Activated naive CD4-positive, alpha-beta T cell treated with anti-CD3 and anti-CD28 coated beads, Interleukin-2, amount 10 ng/mL, durations not matched to agents 7 days and 5 days (primary cell): ENCODE measurements at regions of chr4 and their contacts with region 1.

Region 1: DNA sequence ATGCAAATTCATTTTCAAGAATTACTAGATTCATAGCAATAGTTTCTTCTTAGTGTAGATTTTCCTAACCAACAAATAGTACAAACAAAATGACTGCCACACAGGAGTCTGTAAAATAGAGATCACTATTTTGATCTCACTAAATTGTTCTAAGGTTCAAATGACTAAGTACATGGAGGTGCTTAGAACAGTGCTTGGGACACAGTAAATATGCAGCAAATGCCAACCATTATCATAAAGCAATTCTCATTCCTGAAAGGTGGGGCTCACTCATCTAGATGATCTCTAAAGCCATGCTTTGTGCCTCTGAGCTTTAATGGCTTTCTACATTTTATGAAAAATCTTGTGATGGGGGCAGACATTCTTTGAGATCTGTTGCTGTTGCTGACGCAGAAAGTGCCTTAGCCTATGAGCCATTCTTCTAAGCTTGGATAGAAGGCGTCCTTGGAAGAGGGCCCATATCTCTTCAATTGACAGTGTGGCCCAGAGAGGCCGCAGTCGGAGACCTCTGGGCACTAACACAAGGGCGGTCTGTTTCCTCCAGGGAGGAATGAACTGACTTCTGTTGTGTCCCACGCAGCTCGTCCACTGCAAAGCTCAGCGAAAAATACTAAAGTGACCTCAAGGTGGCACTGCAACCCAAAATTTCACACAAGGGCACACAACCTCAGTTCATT is 23.5 kb downstream of the TLR10 start:
- DNase-seq: peak; percentile 76
- H3K4me3 Mint-ChIP-seq: no peak overlapping the region
- H3K27ac Mint-ChIP-seq: no peak overlapping the region
- H3K4me1 Mint-ChIP-seq: peaks cover 51% of the 10 kb centered on the region
- H3K27me3 Mint-ChIP-seq: no peaks in the 10 kb centered on the region

Region 2: DNA sequence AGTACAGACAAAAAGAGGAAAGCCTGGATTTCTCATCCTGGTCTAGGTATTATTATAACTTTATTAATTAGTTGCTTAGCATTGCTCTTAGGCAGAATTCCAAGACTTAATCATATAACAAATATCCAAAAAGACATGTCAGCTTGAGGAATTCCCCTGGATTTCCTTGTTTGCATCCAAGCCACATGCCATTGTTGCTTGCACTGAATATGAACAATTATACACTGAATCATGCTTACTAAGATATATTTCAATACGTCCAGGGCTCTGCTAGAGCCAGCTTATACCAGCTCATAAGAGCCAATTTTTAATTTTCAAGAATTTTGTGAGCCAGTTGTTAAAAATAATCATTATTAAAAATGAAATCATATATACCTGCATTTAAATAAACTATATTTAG is 29.1 kb after region 1 on chr4:
- CTCF ChIA-PET with region 1: interaction called, 89 read pairs
- DNase-seq: no peak
- H3K4me3 Mint-ChIP-seq: no peak overlapping the region
- H3K27ac Mint-ChIP-seq: no peak overlapping the region
- H3K4me1 Mint-ChIP-seq: peaks cover 19% of the 10 kb centered on the region
- H3K27me3 Mint-ChIP-seq: no peaks in the 10 kb centered on the region

Region 3: GRCh38 chr4:38856524-38857337 is 97.5 kb after region 1 on chr4 and contains the start of gene TLR6:
- CTCF ChIA-PET with region 1: interaction called, 121 read pairs
- DNase-seq: peak; percentile 82
- H3K4me3 Mint-ChIP-seq: peak within 1 kb of the TSS; percentile 71
- H3K27ac Mint-ChIP-seq: peak within 1 kb of the TSS; percentile 98
- H3K4me1 Mint-ChIP-seq: peaks cover 57% of the 10 kb centered on the region
- H3K27me3 Mint-ChIP-seq: peaks cover 8% of the 10 kb centered on the region

Region 4: DNA sequence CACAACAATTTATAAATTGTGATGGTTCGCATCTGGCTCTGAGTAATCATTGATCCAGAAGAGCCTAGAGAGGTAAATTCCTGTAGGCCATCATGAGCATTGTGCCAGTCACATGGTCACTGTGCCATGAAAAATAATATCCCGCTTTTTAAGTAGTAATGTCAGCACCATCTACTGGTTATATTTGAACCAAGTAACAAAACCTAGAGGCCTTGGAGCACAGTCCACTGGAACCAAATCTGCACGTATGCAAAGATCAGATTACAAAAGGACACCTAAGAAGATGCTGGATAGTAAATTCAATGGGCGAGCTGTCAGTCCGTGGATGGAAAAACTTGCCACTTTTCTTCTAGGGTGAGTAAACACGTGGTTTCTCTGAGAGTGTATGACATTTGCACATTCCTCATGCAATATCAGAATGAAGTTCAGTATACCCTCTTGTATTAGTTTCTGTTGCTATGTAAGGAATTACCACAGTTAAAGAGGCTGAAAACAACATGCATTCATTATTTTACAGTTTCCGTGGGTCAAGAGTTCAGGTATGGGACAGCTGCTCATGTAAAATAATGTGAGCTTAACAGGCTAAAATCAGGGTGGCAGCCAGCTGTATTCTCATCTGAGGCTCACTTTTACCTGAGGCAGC is 135.2 kb after region 1 on chr4:
- CTCF ChIA-PET with region 1: interaction called, 34 read pairs
- DNase-seq: no peak
- H3K4me3 Mint-ChIP-seq: no peak overlapping the region
- H3K27ac Mint-ChIP-seq: no peak overlapping the region
- H3K4me1 Mint-ChIP-seq: peaks cover 8% of the 10 kb centered on the region
- H3K27me3 Mint-ChIP-seq: peaks cover 7% of the 10 kb centered on the region

Region 5: GRCh38 chr4:39134683-39135319 is 375.6 kb after region 1 on chr4:
- CTCF ChIA-PET with region 1: interaction called, 22 read pairs
- DNase-seq: no peak
- H3K4me3 Mint-ChIP-seq: no peak overlapping the region
- H3K27ac Mint-ChIP-seq: no peak overlapping the region
- H3K4me1 Mint-ChIP-seq: peaks cover 16% of the 10 kb centered on the region
- H3K27me3 Mint-ChIP-seq: no peaks in the 10 kb centered on the region